ENCODE measurements at regions of chr7 and their contacts with region 1.

Region 1: GRCh38 chr7:131654668-131655326 is 98.4 kb upstream of the PODXL start:
- H3K4me3 Mint-ChIP-seq: no peak overlapping the region
- H3K27ac Mint-ChIP-seq: no peak overlapping the region
- H3K4me1 Mint-ChIP-seq: no peaks in the 10 kb centered on the region
- H3K27me3 Mint-ChIP-seq: peaks cover 3% of the 10 kb centered on the region

Region 2: GRCh38 chr7:131355921-131356777 is 298.6 kb before region 1 on chr7:
- intact Hi-C with region 1: no loop called
- H3K4me3 Mint-ChIP-seq: no peak overlapping the region
- H3K27ac Mint-ChIP-seq: no peak overlapping the region
- H3K4me1 Mint-ChIP-seq: peaks cover 67% of the 10 kb centered on the region
- H3K27me3 Mint-ChIP-seq: no peaks in the 10 kb centered on the region

Region 3: GRCh38 chr7:131507592-131508331 is 147.0 kb before region 1 on chr7:
- intact Hi-C with region 1: loop called (anchors 1 kb)
- H3K4me3 Mint-ChIP-seq: no peak overlapping the region
- H3K27ac Mint-ChIP-seq: no peak overlapping the region
- H3K4me1 Mint-ChIP-seq: peaks cover 11% of the 10 kb centered on the region
- H3K27me3 Mint-ChIP-seq: peaks cover 17% of the 10 kb centered on the region

Region 4: GRCh38 chr7:131521651-131522163 is 133.1 kb before region 1 on chr7:
- intact Hi-C with region 1: no loop called
- H3K4me3 Mint-ChIP-seq: no peak overlapping the region
- H3K27ac Mint-ChIP-seq: no peak overlapping the region
- H3K4me1 Mint-ChIP-seq: no peaks in the 10 kb centered on the region
- H3K27me3 Mint-ChIP-seq: no peaks in the 10 kb centered on the region

Region 5: DNA sequence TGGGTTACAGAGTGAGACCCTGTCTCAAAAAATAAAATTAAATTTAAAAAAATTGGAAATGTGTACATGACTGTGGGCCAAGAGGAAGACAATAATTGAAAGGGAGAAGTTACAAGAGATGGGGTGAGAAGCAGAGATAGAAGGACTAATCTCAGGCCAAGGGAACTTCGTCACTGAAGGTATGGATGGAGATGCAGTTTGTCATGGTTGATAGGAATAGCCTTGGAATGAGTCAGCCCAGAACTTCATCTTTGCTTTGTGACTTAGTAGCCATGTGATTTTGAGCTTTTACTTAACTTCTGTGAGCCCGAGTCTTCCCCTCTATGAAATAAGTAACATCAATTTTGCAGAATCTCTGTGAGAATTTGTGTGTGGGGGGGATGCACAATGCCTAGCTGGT is 91.9 kb before region 1 on chr7:
- intact Hi-C with region 1: no loop called
- H3K4me3 Mint-ChIP-seq: no peak overlapping the region
- H3K27ac Mint-ChIP-seq: no peak overlapping the region
- H3K4me1 Mint-ChIP-seq: no peaks in the 10 kb centered on the region
- H3K27me3 Mint-ChIP-seq: peaks cover 26% of the 10 kb centered on the region

Region 6: DNA sequence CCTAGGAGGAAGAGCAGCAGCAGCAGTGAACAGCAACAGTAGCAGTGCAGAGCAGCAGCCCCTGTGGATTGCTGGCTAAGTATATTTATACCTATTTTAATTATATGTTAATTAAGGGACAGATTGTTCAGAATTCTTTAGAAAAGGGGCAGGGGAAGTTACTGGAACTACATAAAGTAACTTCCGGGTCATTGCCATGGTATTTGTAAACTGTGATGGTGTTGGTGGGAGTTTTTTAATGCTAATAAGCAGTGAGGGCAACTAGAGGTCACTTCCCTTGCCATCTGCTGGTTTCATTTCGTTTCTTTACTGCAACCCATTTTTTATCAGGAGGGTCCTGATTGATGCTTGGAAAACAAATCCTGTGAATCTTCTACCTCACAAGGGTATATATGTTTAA is 131.4 kb after region 1 on chr7:
- intact Hi-C with region 1: no loop called
- H3K4me3 Mint-ChIP-seq: no peak overlapping the region
- H3K27ac Mint-ChIP-seq: no peak overlapping the region
- H3K4me1 Mint-ChIP-seq: no peaks in the 10 kb centered on the region
- H3K27me3 Mint-ChIP-seq: no peaks in the 10 kb centered on the region